PC-9 (cell line): ENCODE measurements at regions of chr3 and their contacts with region 1.

Region 1: GRCh38 chr3:101936419-101937356 is 87.4 kb downstream of the NFKBIZ start:
- DNase-seq: peak in 1 of 2 experiments; percentile 77
- H3K4me3 ChIP-seq: no peak overlapping the region
- H3K27ac ChIP-seq: peak overlapping the region; percentile 75
- H3K4me1 ChIP-seq: peaks cover 16% of the 10 kb centered on the region
- H3K27me3 ChIP-seq: no peaks in the 10 kb centered on the region
- CTCF ChIP-seq: no peak

Region 2: DNA sequence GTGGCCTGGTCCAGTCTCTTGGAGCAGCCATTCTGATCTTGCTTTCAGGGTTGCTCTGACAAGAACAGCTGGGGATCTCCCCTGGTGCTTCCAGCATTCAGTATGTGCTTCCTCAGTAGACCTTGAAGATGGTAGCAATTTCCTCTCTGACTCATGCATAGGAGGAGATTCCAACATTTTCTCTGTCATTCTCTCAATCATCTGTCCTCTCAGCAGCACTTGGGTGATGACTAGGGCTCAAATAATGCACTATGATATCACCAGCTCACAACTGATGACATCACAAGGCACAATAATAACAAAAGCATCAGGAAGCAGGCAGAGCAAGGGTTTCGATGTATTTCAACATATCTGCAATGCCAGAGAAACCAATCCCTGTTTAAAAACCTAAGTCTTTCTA is 34.6 kb before region 1 on chr3:
- CTCF ChIA-PET with region 1: no interaction called
- POLR2A ChIA-PET with region 1: no interaction called
- intact Hi-C with region 1: loop called (anchors 2 kb)
- DNase-seq: peak; percentile 34 to 86
- H3K4me3 ChIP-seq: no peak overlapping the region
- H3K27ac ChIP-seq: peak overlapping the region; percentile 48
- H3K4me1 ChIP-seq: peaks cover 6% of the 10 kb centered on the region
- H3K27me3 ChIP-seq: no peaks in the 10 kb centered on the region
- CTCF ChIP-seq: no peak

Region 3: DNA sequence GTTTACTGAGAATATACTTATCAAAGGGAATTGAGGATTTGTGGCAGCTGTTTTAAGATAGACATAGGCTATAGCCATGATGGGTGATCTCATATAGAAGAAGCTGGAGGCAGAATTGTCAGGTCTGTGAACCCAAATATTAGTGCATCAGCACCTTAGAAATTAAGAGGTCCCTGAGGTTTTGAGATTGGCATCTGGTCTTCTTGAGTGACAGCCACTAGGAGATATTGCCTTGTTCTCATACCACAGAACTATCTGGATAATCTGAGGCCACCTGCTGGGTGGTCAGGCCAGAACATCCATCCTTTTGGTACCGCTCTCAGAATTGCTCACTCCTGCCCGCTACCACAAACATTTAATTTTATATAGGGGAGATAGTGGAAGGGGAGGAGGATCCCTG is 287.4 kb after region 1 on chr3:
- CTCF ChIA-PET with region 1: interaction called, 4 read pairs
- POLR2A ChIA-PET with region 1: no interaction called
- intact Hi-C with region 1: loop called (anchors 1 kb)
- DNase-seq: peak in 1 of 2 experiments; percentile 43
- H3K4me3 ChIP-seq: no peak overlapping the region
- H3K27ac ChIP-seq: no peak overlapping the region
- H3K4me1 ChIP-seq: no peaks in the 10 kb centered on the region
- H3K27me3 ChIP-seq: no peaks in the 10 kb centered on the region
- CTCF ChIP-seq: peak; percentile 61

Region 4: GRCh38 chr3:102471001-102471400 is 534.3 kb after region 1 on chr3:
- CTCF ChIA-PET with region 1: no interaction called
- POLR2A ChIA-PET with region 1: no interaction called
- intact Hi-C with region 1: no loop called
- DNase-seq: no peak
- H3K4me3 ChIP-seq: no peak overlapping the region
- H3K27ac ChIP-seq: no peak overlapping the region
- H3K4me1 ChIP-seq: no peaks in the 10 kb centered on the region
- H3K27me3 ChIP-seq: no peaks in the 10 kb centered on the region
- CTCF ChIP-seq: 0 out of 2 replicates have a peak, but pooled peaks have one; percentile 29